Left ventricle myocardium inferior (tissue), 1 donor: ENCODE measurements at regions of chr3 and their contacts with region 1.

Region 1: DNA sequence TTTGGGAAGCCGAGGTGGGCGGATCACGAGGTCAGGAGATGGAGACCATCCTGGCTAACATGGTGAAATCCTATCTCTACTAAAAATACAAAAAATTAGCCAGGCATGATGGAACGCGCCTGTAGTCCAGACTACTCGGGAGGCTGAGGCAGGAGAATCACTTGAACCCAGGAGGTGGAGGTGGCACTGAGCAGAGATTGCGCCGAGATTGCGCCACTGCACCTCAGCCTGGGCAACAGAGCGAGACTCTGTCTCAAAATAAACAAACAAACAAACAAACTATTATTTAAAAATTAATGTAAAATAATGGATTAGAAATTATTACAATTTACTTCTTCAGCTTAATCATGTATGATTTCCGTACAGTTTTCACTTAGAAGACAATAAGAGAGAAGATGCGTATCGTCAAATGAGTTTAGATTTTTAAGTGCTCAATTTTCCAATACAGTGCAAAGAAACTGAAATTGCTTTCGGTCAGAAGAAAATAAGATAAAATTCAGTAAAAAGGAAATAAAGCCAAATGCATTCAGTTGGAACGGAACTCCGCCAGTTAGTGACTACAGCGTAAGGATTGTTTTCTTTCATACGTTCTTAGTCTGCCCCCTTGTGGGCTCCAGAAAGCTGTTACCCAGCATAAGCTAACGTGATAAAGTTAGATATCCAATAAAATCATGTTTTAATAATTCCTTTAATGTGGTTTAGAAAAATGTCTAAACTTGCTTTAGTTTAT is 24.8 kb downstream of the AADAC start:
- DNase-seq: no peak
- H3K4me3 ChIP-seq: peak overlapping the region; percentile 48
- H3K27ac ChIP-seq: no peak overlapping the region
- H3K4me1 ChIP-seq: no peaks in the 10 kb centered on the region
- H3K27me3 ChIP-seq: no peaks in the 10 kb centered on the region
- CTCF ChIP-seq: peak; percentile 88

Region 2: GRCh38 chr3:151439652-151440129 is 399.1 kb before region 1 on chr3:
- intact Hi-C with region 1: loop called (anchors 5 kb)
- DNase-seq: no peak
- H3K4me3 ChIP-seq: no peak overlapping the region
- H3K27ac ChIP-seq: no peak overlapping the region
- H3K4me1 ChIP-seq: no peaks in the 10 kb centered on the region
- H3K27me3 ChIP-seq: peaks cover 12% of the 10 kb centered on the region
- CTCF ChIP-seq: peak; percentile 87

Region 3: DNA sequence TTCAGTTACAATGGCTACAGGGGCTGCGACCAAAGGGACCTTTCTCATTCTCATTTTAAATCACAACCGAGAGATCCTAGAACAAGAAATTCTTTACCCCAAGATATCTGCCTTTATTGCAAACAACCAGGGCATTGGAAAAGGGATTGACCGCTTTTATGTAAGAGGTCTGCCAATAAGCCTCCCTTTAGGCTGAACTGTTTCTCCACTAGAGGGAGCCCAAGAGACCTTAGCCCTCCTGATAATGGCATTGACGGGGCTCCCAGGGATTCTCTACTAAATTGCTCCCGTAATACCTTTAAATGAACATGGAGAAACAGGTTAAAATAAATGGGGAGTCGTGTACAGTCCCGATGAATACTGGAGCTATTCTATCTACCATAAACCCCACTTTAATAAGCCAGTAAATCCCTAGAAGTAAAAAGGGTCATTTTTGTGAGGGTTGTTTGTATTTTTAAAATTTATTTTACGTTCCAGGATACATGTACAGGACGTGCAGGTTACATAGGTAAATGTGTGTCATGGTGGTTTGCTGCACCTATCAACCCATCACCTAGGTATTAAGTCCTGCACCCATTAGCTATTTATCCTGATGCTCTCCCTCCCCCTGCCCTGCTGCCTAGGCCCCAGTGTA is 370.3 kb before region 1 on chr3:
- intact Hi-C with region 1: loop called (anchors 10 kb)
- DNase-seq: no peak
- H3K4me3 ChIP-seq: no peak overlapping the region
- H3K27ac ChIP-seq: no peak overlapping the region
- H3K4me1 ChIP-seq: no peaks in the 10 kb centered on the region
- H3K27me3 ChIP-seq: peaks cover 8% of the 10 kb centered on the region
- CTCF ChIP-seq: peak; percentile 89